HEK293 (cell line): ENCODE measurements at regions of chr10 and their contacts with region 1.

Region 1: GRCh38 chr10:17228091-17228940 is at the start of gene VIM:
- H3K4me3 ChIP-seq: peak within 1 kb of the TSS; percentile 99
- H3K27ac ChIP-seq: peak within 1 kb of the TSS; percentile 97
- H3K4me1 ChIP-seq: peaks cover 11% of the 10 kb centered on the region
- CTCF ChIP-seq: peak; percentile 23; the same call in 1 of the 2 replicates

Region 2: GRCh38 chr10:17006631-17007417 is 221.5 kb before region 1 on chr10:
- CTCF ChIA-PET with region 1: no interaction called
- POLR2A ChIA-PET with region 1: interaction called, 20 read pairs
- H3K4me3 ChIP-seq: no peak overlapping the region
- H3K27ac ChIP-seq: peak overlapping the region; percentile 54
- H3K4me1 ChIP-seq: peaks cover 10% of the 10 kb centered on the region; the same call in 1 of the 2 replicates
- CTCF ChIP-seq: no peak

Region 3: DNA sequence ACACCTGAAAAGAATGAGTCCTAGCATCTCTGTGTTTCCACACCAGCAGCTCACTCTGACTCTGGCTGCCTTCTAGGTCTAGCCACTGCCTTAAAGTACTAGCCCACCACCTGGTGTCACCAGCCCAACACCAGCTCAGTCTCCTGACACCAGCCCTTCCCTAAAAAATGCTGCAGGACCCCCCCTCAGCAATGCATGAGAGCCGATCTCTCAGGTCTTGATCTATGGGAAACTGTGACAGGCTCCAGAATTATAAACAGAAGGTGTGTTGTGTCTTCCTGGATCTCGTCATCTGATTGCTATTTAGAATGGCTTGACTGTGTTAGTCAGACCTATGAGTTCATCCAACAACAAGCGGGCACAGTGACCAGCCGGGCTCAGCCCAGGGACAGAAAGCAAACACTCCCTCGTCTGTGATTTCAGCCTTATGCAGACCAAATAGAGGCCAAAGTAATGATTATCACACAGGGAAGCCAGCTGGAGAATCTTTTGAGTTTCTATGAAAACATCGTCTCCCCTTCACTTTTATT is 165.3 kb before region 1 on chr10:
- CTCF ChIA-PET with region 1: no interaction called
- POLR2A ChIA-PET with region 1: interaction called, 31 read pairs
- H3K4me3 ChIP-seq: peak overlapping the region; percentile 3
- H3K27ac ChIP-seq: peak overlapping the region; percentile 51
- H3K4me1 ChIP-seq: peaks cover 36% of the 10 kb centered on the region
- CTCF ChIP-seq: no peak; the same call in 1 of the 2 replicates

Region 4: DNA sequence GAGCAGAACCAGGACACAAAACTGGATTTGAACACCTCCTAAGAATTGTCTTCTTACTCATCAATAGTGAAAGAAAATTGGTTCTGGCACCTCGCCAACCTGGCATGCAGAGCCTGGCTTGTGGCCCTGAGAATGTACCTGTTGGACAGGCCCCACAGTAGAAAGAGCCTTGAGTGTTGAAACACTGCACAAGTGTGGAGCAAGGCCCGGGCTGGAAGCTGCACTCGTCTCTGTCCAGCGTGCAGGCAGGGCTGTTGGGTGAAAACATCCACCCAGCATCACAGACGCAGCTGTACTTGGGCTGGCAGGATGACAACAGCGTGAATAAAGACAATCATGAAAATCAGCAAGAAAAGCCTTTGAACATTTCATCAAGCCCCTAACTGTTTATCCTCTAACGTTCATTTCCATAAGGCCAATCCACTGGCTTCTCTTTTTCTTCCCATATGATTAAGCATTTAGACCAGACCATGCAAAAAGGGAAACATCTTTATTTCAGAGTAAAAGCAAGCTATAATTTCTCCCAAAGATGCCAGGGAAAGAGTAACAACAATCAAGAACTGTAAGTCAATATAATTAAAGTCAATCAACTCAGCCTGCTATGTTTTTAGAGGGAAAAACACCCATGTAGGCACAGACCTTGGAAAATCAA is 114.3 kb before region 1 on chr10:
- CTCF ChIA-PET with region 1: interaction called, 3 read pairs
- POLR2A ChIA-PET with region 1: interaction called, 10 read pairs
- H3K4me3 ChIP-seq: no peak overlapping the region
- H3K27ac ChIP-seq: peak overlapping the region; percentile 37; the same call in 1 of the 2 replicates
- H3K4me1 ChIP-seq: peaks cover 5% of the 10 kb centered on the region; the same call in 1 of the 2 replicates
- CTCF ChIP-seq: no peak

Region 5: DNA sequence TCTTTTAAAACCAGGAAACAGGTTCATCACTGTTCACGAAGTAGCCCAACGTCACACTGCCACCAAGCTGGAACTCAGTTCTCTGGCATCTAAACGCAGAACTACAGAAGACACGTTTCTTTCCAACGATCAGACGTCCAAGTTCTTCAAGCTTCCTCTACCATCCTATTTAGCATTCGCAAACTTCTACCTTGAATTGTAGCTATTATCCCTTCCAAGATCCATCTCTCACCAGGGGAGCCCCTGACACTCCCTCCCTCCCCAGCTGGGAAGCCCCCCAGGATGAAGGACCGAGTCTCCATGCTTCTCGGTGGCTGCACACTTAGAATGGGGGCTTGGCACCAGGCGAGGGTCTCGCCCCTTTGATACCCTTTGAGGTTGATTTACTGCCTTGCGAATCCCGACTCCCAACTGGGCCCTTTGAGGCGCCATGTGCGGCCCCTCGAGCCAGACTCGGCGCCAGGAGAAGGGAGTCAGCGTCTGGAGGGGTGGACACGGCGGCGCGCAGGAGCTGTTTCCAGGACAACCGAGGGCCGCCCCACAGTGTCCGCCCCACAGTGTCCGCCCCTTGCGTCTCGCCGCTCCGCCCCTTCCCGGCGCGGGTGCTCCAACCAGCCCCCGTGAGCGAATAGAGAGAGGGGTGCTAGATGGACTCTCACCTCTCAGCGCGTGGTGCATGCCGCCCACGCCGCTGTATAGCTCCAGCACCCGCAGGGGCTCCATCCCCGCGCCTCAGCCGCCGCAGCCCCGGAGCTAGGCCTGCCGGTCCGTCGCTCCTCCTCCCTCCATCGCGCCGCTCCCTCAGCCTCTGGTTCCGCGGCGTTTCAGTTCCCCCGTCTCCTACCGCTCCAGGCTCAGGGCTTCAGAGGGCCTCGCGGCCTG is 27.2 kb before region 1 on chr10 and contains the start of gene TRDMT1:
- CTCF ChIA-PET with region 1: interaction called, 5 read pairs
- POLR2A ChIA-PET with region 1: interaction called, 78 read pairs
- H3K4me3 ChIP-seq: peak within 1 kb of the TSS; percentile 76
- H3K27ac ChIP-seq: peak within 1 kb of the TSS; percentile 87
- H3K4me1 ChIP-seq: peaks cover 4% of the 10 kb centered on the region; the same call in 1 of the 2 replicates
- CTCF ChIP-seq: peak; percentile 51; the same call in 1 of the 2 replicates

Region 6: GRCh38 chr10:17216217-17216900 is 12.0 kb before region 1 on chr10:
- CTCF ChIA-PET with region 1: interaction called, 9 read pairs
- POLR2A ChIA-PET with region 1: interaction called, 46 read pairs
- H3K4me3 ChIP-seq: no peak overlapping the region
- H3K27ac ChIP-seq: 0 out of 2 replicates have a peak overlapping the region, but pooled peaks have one; percentile 4
- H3K4me1 ChIP-seq: peaks cover 8% of the 10 kb centered on the region
- CTCF ChIP-seq: no peak

Region 7: DNA sequence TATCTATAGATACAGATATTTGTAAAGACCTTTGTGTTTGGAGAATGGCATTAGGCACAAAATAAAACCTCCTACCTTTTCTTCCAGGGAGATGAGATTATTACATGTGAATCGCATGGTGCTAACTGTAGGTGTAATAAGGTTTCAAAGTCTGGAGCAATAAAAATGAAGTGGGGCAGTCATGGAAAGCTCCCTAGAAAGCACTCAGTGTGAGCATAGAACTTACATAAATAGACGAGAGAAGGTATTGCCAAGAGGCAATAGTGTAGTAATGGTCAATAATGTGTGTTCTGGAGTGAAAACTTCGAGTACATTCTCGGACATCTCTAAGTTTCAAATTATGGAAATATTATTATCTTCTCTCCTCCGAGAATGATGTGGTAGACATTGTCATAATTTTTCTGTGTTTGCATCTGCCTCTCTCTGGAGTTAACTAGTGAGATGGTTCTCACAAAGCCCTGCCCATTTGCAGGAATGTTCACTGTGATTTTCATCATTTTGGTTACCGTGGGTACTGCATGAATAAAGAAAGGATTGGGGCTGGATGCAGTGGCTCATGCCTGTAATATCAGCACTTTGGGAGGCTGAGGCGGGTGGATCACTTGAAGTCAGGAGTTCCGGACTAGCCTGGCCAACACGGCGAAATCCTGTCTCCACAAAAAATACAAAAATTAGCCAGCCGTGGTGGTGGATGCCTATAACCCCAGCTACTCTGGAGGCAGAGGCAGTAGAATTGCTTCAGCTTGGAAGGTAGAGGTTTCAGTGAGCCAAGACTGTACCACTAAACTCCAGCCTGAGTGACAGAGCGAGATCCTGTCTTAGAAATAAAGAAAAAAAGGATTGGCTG is 10.4 kb after region 1 on chr10:
- CTCF ChIA-PET with region 1: no interaction called
- POLR2A ChIA-PET with region 1: interaction called, 13 read pairs
- H3K4me3 ChIP-seq: no peak overlapping the region
- H3K27ac ChIP-seq: no peak overlapping the region
- H3K4me1 ChIP-seq: no peaks in the 10 kb centered on the region
- CTCF ChIP-seq: no peak